Activated naive CD4-positive, alpha-beta T cell treated with anti-CD3 and anti-CD28 coated beads for 36 hours (primary cell): ENCODE measurements at regions of chr3 and their contacts with region 1.

Region 1: DNA sequence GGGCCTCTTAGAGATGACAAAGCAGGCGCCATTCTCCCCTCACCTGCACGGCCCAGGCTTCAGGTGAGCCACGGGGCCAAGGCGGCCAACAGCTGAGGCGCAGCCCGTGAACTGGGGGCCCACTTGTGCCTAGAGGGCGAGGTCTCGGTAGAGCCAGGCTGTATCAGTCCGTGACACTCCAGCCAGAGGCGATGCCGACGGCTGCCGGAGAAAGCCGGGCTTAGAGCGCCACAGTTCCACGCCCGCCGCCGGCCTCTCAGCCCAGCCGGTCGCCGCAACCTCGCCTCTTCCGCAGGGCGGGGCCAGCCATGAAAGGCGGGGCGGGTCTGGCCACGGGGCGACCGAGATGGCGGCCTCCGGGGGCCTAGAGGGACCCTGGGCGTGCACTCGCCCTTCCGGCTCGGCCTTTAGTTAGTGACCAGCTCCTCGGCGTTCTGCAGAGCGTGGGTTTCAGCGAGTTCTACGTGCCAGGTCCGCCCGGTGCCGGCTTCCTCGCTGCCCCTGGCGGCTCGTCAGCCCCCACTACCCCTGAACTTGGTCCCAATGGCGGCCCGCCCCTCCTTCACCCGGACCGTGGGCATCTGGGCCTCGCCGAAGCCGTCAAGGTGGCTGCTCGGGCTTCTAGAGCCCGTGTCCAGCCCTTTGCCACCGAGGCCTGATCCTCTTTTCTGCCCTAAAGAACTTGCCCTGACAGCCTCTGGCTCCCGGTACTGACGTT is at the start of gene ZNF621:
- DNase-seq: peak; percentile 82
- H3K4me3 Mint-ChIP-seq: peak within 1 kb of the TSS; percentile 92
- H3K27ac Mint-ChIP-seq: peak within 1 kb of the TSS; percentile 85
- H3K4me1 Mint-ChIP-seq: peaks cover 11% of the 10 kb centered on the region
- H3K27me3 Mint-ChIP-seq: no peaks in the 10 kb centered on the region
- total RNA-seq, gene ZNF621: 16.4 to 17.7 TPM

Region 2: DNA sequence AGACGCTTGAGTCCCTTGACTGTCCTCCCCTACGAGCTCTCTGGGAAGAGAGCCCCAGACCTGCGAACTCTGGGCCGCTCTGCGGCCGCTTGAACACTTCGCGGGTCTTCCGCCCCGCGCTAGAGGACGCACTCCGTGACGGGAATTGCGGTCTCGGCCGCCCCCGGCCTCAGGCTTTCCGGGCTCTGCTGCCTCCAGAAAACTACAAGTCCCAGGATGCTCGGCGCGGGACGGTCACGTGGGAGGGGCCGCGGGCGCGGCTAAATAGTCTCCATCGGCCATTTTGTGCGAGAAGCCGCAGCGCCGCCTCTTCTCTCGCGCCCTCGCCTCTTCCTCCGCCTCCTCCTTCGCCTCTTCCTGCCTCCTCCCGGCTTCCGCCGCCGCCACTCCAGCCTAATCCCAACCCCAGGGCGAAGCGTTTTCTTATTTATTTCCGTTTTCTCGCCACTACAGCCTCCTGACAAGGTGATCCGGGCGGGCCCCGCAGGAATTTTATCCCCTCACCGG is 215.3 kb before region 1 on chr3 and contains the start of gene EIF1B:
- CTCF ChIA-PET with region 1: no interaction called
- intact Hi-C with region 1: loop called (anchors 1 kb)
- DNase-seq: peak; percentile 99
- H3K4me3 Mint-ChIP-seq: peak within 1 kb of the TSS; percentile 99
- H3K27ac Mint-ChIP-seq: peak within 1 kb of the TSS; percentile 98
- H3K4me1 Mint-ChIP-seq: peaks cover 24% of the 10 kb centered on the region
- H3K27me3 Mint-ChIP-seq: no peaks in the 10 kb centered on the region
- total RNA-seq, gene EIF1B: 47.0 to 49.2 TPM

Region 3: GRCh38 chr3:40476478-40477470 is 48.0 kb before region 1 on chr3 and contains the start of gene ZNF619:
- CTCF ChIA-PET with region 1: no interaction called
- intact Hi-C with region 1: loop called (anchors 1 kb)
- DNase-seq: peak; percentile 55
- H3K4me3 Mint-ChIP-seq: peak within 1 kb of the TSS; percentile 84
- H3K27ac Mint-ChIP-seq: peak within 1 kb of the TSS; percentile 54
- H3K4me1 Mint-ChIP-seq: peaks cover 10% of the 10 kb centered on the region
- H3K27me3 Mint-ChIP-seq: no peaks in the 10 kb centered on the region
- total RNA-seq, gene ZNF619: 4.2 to 4.7 TPM

Region 4: GRCh38 chr3:40505599-40506462 is 18.9 kb before region 1 on chr3 and contains the start of gene ZNF620:
- CTCF ChIA-PET with region 1: interaction called, 4 read pairs
- intact Hi-C with region 1: loop called (anchors 1 kb)
- DNase-seq: peak; percentile 54
- H3K4me3 Mint-ChIP-seq: peak within 1 kb of the TSS; percentile 86
- H3K27ac Mint-ChIP-seq: peak within 1 kb of the TSS; percentile 56
- H3K4me1 Mint-ChIP-seq: peaks cover 16% of the 10 kb centered on the region
- H3K27me3 Mint-ChIP-seq: no peaks in the 10 kb centered on the region
- total RNA-seq, gene ZNF620: 2.3 TPM

Region 5: DNA sequence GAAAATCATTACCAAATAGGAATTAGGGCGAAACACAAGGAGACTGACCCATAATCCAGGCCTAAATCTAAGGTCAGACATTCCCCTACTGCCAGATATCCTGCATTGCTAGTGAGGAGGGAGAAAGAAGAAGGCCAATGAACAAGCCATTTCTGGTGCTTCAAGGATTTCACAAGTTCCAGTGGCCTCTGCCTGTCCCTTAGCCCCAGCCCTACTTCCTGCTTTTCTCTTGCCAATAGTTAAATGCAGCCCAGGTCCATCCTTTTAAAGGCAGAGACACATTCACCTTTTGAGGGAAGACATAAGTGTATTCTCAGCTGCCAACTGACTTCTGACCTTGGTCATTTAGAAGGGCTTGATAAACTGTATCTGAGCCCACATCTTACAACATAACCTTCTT is 135.8 kb after region 1 on chr3:
- CTCF ChIA-PET with region 1: no interaction called
- intact Hi-C with region 1: no loop called
- DNase-seq: no peak
- H3K4me3 Mint-ChIP-seq: no peak overlapping the region
- H3K27ac Mint-ChIP-seq: no peak overlapping the region
- H3K4me1 Mint-ChIP-seq: no peaks in the 10 kb centered on the region
- H3K27me3 Mint-ChIP-seq: peaks cover 10% of the 10 kb centered on the region

Region 6: DNA sequence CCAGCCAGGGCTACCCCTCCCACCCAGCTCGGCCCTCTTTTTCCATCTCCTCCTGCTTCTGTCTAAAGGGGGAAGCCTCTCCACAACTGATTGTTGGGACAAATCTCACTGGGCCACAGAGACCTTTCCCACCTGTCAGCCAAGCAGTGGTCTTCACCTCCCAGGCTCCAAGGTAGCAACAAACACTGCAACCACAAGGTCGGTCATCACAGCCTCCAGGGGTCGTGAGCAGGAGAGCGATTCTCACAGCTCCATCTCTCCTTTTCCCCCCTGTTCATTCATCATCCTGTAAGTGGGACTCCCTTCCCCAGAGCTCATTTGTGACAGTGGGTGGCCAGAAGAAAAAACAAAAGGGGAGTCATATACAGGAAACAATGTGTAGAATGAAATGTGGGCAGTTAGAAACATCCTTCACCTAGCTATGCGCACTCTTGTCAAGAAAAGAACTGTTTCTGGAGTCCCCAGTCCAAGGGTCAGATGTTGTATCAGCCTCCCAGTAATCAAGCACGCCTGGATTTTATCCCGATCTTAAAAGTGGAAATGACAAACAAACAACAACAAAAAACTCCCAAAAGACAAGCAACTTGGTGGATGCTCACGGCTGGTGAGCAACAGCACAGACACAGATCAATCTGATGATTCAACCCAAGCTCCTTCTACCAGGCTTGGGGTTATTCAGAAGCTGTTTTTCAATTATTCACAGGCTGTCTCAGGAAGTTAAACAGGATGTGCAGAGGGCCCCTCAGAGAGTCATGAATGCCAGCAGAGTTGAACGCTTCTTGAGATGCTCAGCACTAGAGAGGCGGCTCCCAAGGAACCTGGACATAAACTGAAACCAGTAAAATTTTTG is 1863.3 kb after region 1 on chr3:
- CTCF ChIA-PET with region 1: no interaction called
- intact Hi-C with region 1: loop called (anchors 10 kb)
- DNase-seq: peak; percentile 75
- H3K4me3 Mint-ChIP-seq: peak overlapping the region; percentile 44
- H3K27ac Mint-ChIP-seq: peak overlapping the region; percentile 96
- H3K4me1 Mint-ChIP-seq: peaks cover 25% of the 10 kb centered on the region
- H3K27me3 Mint-ChIP-seq: no peaks in the 10 kb centered on the region